ENCODE measurements at regions of chr1 and their contacts with region 1.

Region 1: GRCh38 chr1:197902454-197903195 is at the start of gene C1orf53:
- DNase-seq: peak; percentile 91
- H3K4me3 ChIP-seq: peak within 1 kb of the TSS; percentile 73
- H3K27ac ChIP-seq: peak within 1 kb of the TSS; percentile 69
- H3K4me1 ChIP-seq: peaks cover 14% of the 10 kb centered on the region
- CTCF ChIP-seq: no peak
- total RNA-seq, gene C1orf53: 4.1 TPM in 1 of 2 replicates, not detected in the other

Region 2: GRCh38 chr1:197884173-197884572 is 18.5 kb before region 1 on chr1:
- CTCF ChIA-PET with region 1: no interaction called
- POLR2A ChIA-PET with region 1: interaction called, 12 read pairs
- intact Hi-C with region 1: no loop called
- DNase-seq: no peak
- H3K4me3 ChIP-seq: no peak overlapping the region
- H3K27ac ChIP-seq: no peak overlapping the region
- H3K4me1 ChIP-seq: no peaks in the 10 kb centered on the region
- CTCF ChIP-seq: no peak

Region 3: GRCh38 chr1:197890936-197891335 is 11.7 kb before region 1 on chr1:
- CTCF ChIA-PET with region 1: no interaction called
- POLR2A ChIA-PET with region 1: interaction called, 14 read pairs
- intact Hi-C with region 1: no loop called
- DNase-seq: no peak
- H3K4me3 ChIP-seq: no peak overlapping the region
- H3K27ac ChIP-seq: no peak overlapping the region
- H3K4me1 ChIP-seq: no peaks in the 10 kb centered on the region
- CTCF ChIP-seq: no peak

Region 4: DNA sequence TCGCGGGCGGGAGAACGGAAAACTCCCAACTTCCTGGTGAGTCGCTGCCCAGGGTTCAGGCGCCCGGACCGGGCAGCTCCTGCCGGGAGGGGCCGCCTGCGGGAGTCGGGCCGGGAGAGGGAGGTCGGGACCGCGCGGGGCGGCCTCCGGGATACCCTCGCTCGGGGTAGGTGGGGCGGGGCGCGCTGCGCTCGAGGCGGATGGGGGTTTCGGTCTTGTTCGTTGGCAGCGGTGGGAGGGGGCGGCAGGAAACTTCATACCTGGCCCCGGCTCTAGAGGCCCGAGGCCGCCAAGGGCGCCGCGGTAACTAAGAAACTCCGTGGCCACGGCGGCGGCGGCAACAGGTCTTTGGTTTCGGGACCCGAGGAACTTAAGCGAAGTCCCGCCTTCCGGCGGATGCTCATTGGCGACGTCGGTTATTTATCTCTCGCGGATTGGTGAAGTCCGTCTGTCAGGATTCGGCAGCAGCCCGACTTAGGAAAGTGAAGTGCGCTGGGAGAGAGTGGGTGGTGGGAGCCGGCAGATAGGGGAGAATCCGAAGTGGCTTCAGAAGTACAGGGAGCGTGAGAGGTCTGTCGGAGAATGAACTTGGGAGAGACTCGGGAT is 254.7 kb after region 1 on chr1:
- CTCF ChIA-PET with region 1: no interaction called
- POLR2A ChIA-PET with region 1: no interaction called
- intact Hi-C with region 1: loop called (anchors 2 kb)
- DNase-seq: peak; percentile 91
- H3K4me3 ChIP-seq: peak overlapping the region; percentile 97
- H3K27ac ChIP-seq: peak overlapping the region; percentile 70
- H3K4me1 ChIP-seq: peaks cover 30% of the 10 kb centered on the region
- CTCF ChIP-seq: no peak